Mammary epithelial cell (primary cell): ENCODE measurements at regions of chr12 and their contacts with region 1.

Region 1: DNA sequence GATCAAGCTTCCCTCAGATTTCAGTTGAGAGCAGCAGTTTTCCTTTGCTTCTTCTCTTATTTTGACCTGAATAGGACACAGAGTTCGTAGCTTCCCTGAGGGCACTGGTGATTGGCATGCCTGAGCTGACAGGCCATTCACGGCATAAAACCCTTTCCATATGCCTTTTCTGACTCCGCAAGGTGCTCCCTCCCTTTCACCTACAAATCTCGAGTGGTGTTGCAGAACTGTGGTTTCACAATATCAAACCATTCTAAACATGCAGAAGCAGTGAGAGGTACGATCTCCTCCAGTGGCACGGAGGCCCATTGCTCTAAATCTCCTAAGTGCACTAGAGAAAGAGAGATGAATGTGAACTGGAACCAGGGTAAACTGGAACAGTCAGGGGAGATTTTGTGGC is 23.8 kb downstream of the CLSTN3 start:
- DNase-seq: no peak
- H3K4me3 ChIP-seq: no peak overlapping the region
- H3K27ac ChIP-seq: no peak overlapping the region
- H3K4me1 ChIP-seq: peaks cover 10% of the 10 kb centered on the region
- H3K27me3 ChIP-seq: no peaks in the 10 kb centered on the region
- CTCF ChIP-seq: no peak

Region 2: GRCh38 chr12:7118881-7119280 is 35.1 kb before region 1 on chr12:
- CTCF ChIA-PET with region 1: no interaction called
- dilution Hi-C with region 1: loop called (anchors 5 kb)
- in situ Hi-C with region 1: no loop called
- intact Hi-C with region 1: no loop called
- DNase-seq: no peak
- H3K4me3 ChIP-seq: no peak overlapping the region
- H3K27ac ChIP-seq: no peak overlapping the region
- H3K4me1 ChIP-seq: no peaks in the 10 kb centered on the region
- H3K27me3 ChIP-seq: no peaks in the 10 kb centered on the region
- CTCF ChIP-seq: no peak